ENCODE measurements at regions of chr6 and their contacts with region 1.

Region 1: DNA sequence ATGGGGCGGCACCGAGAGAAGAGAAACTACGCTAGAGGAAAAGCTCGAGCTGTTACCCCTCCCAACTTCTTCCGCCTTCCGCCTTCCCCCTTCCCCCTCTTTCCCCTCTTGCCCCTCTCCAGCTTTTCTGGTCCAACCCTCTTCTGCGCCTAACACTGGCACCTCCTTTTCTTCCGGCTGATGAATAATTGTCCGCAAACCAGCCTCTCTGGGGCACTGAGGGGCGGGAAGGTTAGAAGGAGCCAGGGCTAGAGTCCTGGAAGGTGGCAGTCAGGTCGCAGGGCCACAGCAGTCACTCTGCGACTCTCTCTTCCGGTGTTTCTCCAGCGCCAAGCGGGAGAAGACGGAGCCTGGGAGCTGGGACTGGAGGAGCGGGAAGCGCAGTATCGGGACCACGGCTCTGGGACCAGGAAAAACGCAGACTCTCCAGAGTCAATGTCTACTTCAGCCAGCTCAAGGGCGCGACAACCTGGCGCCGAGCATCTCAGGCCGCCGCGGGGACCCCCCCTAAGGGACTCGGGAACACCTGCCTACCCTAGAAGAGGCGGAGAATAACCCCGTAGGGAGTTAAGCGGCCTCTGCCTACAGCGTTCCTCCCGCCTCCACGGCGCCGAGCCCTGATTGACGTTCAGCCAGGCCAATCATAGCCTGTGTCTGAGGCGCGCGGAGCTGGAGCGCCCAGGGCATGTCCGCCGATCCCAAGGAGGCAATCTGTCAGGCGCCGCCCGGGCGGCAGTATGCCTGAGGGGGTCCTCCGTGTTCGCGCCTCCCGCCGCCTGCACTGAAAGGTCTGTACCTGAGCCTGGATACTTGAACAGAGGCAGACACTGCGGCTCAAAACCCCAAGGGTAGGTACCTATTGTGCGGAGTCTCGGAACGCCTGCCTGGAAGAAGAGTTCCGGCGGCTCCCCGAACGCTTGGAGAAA is 40.4 kb downstream of the PSMB9 start:
- DNase-seq: peak; percentile 84 to 99
- H3K4me3 ChIP-seq: peak overlapping the region; percentile 74 to 92 (median 84)
- H3K27ac ChIP-seq: peak overlapping the region; percentile 39; the same call in 1 of the 2 replicates
- H3K4me1 ChIP-seq: peaks cover 0 to 4% (median 1%) of the 10 kb centered on the region in 4 experiments; a peak in 2 of 7 replicates
- H3K27me3 ChIP-seq: no peaks in the 10 kb centered on the region; a peak in 1 of 7 replicates
- CTCF ChIP-seq: no peak
- EP300 ChIP-seq: no peak
- POLR2A ChIP-seq: peak in 1 of 2 experiments; percentile 69; a peak in 2 of 3 replicates
- RAD21 ChIP-seq: no peak

Region 2: DNA sequence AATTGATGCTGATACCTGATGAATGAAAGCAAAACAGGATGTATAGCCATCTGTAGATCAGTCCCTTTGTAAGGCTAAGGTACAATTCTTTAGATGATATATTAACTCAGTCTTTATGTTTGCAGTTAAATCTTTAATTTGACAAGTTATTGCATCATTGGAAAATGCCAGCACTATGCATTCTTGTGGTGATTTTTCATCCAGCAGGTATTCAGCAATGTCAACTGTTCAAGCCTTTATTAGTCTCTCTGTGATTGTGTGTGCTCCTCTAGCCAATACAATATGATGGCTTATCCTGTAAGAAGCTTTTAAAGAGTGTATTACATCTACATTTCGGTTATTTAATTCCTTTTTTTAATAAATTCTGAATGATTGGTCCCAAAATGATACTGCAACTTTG is 12.2 kb after region 1 on chr6:
- CTCF ChIA-PET with region 1: interaction called, 3 read pairs
- POLR2A ChIA-PET with region 1: interaction called, 14 read pairs
- DNase-seq: no peak
- H3K4me3 ChIP-seq: no peak overlapping the region
- H3K27ac ChIP-seq: no peak overlapping the region
- H3K4me1 ChIP-seq: no peaks in the 10 kb centered on the region
- H3K27me3 ChIP-seq: no peaks in the 10 kb centered on the region
- CTCF ChIP-seq: no peak
- EP300 ChIP-seq: no peak
- POLR2A ChIP-seq: no peak
- RAD21 ChIP-seq: no peak

Region 3: GRCh38 chr6:32940656-32941213 is 46.4 kb after region 1 on chr6 and contains the start of gene HLA-DMB:
- CTCF ChIA-PET with region 1: no interaction called
- POLR2A ChIA-PET with region 1: interaction called, 11 read pairs
- DNase-seq: peak in 1 of 2 experiments; percentile 62
- H3K4me3 ChIP-seq: peak within 1 kb of the TSS; percentile 6 to 49 (median 26); a peak in 6 of 8 replicates
- H3K27ac ChIP-seq: no peak within 1 kb of the TSS
- H3K4me1 ChIP-seq: peaks cover 0 to 6% (median 1%) of the 10 kb centered on the region in 4 experiments; a peak in 4 of 7 replicates
- H3K27me3 ChIP-seq: no peaks in the 10 kb centered on the region
- CTCF ChIP-seq: no peak
- EP300 ChIP-seq: no peak
- POLR2A ChIP-seq: no peak
- RAD21 ChIP-seq: no peak
- total RNA-seq, gene HLA-DMB: 1.3 and 2.7 TPM in 2 replicates

Region 4: GRCh38 chr6:32947552-32948465 is 53.5 kb after region 1 on chr6:
- CTCF ChIA-PET with region 1: interaction called, 16 read pairs
- POLR2A ChIA-PET with region 1: interaction called, 10 read pairs
- DNase-seq: peak; percentile 15 to 63
- H3K4me3 ChIP-seq: no peak overlapping the region
- H3K27ac ChIP-seq: no peak overlapping the region
- H3K4me1 ChIP-seq: peaks cover 0 to 8% (median 3%) of the 10 kb centered on the region in 4 experiments; a peak in 5 of 7 replicates
- H3K27me3 ChIP-seq: no peaks in the 10 kb centered on the region; a peak in 1 of 7 replicates
- CTCF ChIP-seq: peak; percentile 60 to 92 (median 91)
- EP300 ChIP-seq: no peak
- POLR2A ChIP-seq: no peak
- RAD21 ChIP-seq: peak; percentile 95 to 96

Region 5: GRCh38 chr6:32991972-32992371 is 97.6 kb after region 1 on chr6:
- CTCF ChIA-PET with region 1: no interaction called
- POLR2A ChIA-PET with region 1: no interaction called
- DNase-seq: no peak
- H3K4me3 ChIP-seq: no peak overlapping the region
- H3K27ac ChIP-seq: no peak overlapping the region
- H3K4me1 ChIP-seq: peaks cover 0 to 6% (median 2%) of the 10 kb centered on the region in 4 experiments; a peak in 4 of 7 replicates
- H3K27me3 ChIP-seq: no peaks in the 10 kb centered on the region; a peak in 1 of 7 replicates
- CTCF ChIP-seq: no peak
- EP300 ChIP-seq: no peak
- POLR2A ChIP-seq: no peak
- RAD21 ChIP-seq: no peak